Aorta (tissue), 5 donors: ENCODE measurements at regions of chr6 and their contacts with region 1.

Region 1: GRCh38 chr6:100001915-100002388 is 7.9 kb upstream of the MCHR2 start:
- DNase-seq: no peak
- ATAC-seq: peak; percentile 77
- H3K4me3 ChIP-seq: no peak overlapping the region
- H3K27ac ChIP-seq: no peak overlapping the region
- H3K4me1 ChIP-seq: no peaks in the 10 kb centered on the region
- H3K27me3 ChIP-seq: no peaks in the 10 kb centered on the region

Region 2: GRCh38 chr6:100099189-100100074 is 97.5 kb after region 1 on chr6:
- intact Hi-C with region 1: loop called in 1 of 2 experiments (anchors 5 kb)
- DNase-seq: no peak
- ATAC-seq: no peak
- H3K4me3 ChIP-seq: no peak overlapping the region
- H3K27ac ChIP-seq: no peak overlapping the region
- H3K4me1 ChIP-seq: no peaks in the 10 kb centered on the region
- H3K27me3 ChIP-seq: no peaks in the 10 kb centered on the region

Region 3: DNA sequence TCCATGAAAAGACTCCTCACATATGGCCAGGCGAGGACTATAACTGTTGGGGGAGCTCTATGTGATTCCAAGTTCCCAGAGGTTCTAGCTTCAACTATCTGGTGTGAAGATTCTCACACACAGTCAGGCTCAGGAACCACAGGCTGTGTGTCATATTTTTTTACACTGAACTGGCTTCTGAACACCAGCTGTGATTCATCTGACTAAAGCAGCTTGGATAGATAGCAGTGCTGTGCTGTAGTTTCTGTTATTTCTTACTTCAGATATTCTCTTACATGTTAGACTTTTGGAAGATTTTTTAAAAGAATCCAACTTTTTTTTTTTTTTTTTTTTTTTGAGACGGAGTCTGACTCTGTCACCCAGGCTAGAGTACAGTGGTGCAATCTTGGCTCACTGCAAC is 132.8 kb after region 1 on chr6:
- intact Hi-C with region 1: no loop called
- DNase-seq: no peak
- ATAC-seq: no peak
- H3K4me3 ChIP-seq: no peak overlapping the region
- H3K27ac ChIP-seq: no peak overlapping the region
- H3K4me1 ChIP-seq: no peaks in the 10 kb centered on the region
- H3K27me3 ChIP-seq: no peaks in the 10 kb centered on the region

Region 4: GRCh38 chr6:100479179-100480035 is 477.5 kb after region 1 on chr6:
- intact Hi-C with region 1: loop called in 1 of 2 experiments (anchors 10 kb)
- DNase-seq: no peak
- ATAC-seq: no peak
- H3K4me3 ChIP-seq: no peak overlapping the region
- H3K27ac ChIP-seq: no peak overlapping the region
- H3K4me1 ChIP-seq: no peaks in the 10 kb centered on the region
- H3K27me3 ChIP-seq: no peaks in the 10 kb centered on the region

Region 5: GRCh38 chr6:100664274-100665040 is 662.5 kb after region 1 on chr6:
- intact Hi-C with region 1: loop called in 1 of 2 experiments (anchors 5 kb)
- DNase-seq: no peak
- ATAC-seq: no peak
- H3K4me3 ChIP-seq: no peak overlapping the region
- H3K27ac ChIP-seq: no peak overlapping the region
- H3K4me1 ChIP-seq: no peaks in the 10 kb centered on the region
- H3K27me3 ChIP-seq: no peaks in the 10 kb centered on the region

Region 6: DNA sequence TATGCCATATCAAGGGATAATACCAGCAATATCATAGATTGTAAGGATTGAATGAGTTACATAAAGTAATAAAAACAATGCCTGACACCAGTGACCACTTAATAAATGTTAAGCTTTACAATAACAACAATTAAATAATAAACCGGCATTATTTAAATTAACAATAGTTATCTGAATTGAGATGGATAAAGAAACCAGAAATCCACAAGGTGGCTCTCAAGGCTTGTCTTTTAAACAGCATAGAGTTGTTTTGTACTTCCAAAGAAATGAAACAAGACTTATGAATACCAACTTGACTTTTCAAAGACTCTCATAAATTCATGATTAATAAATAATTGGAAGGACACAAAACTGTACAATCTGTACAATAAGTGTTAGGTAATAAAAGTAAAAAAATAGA is 676.1 kb after region 1 on chr6:
- intact Hi-C with region 1: loop called in 1 of 2 experiments (anchors 5 kb)
- DNase-seq: no peak
- ATAC-seq: no peak
- H3K4me3 ChIP-seq: no peak overlapping the region
- H3K27ac ChIP-seq: no peak overlapping the region
- H3K4me1 ChIP-seq: no peaks in the 10 kb centered on the region
- H3K27me3 ChIP-seq: no peaks in the 10 kb centered on the region